ENCODE measurements at regions of chr14 and their contacts with region 1.

Region 1: GRCh38 chr14:74249433-74250375 is 10.5 kb downstream of the VSX2 start:
- DNase-seq: no peak
- H3K4me3 ChIP-seq: no peak overlapping the region
- H3K27ac ChIP-seq: no peak overlapping the region
- H3K4me1 ChIP-seq: no peaks in the 10 kb centered on the region
- H3K27me3 ChIP-seq: no peaks in the 10 kb centered on the region
- CTCF ChIP-seq: no peak

Region 2: GRCh38 chr14:74217672-74218448 is 31.8 kb before region 1 on chr14:
- CTCF ChIA-PET with region 1: interaction called, 5 read pairs
- POLR2A ChIA-PET with region 1: no interaction called
- intact Hi-C with region 1: loop called (anchors 5 kb)
- DNase-seq: peak; percentile 81
- H3K4me3 ChIP-seq: peak overlapping the region; percentile 20
- H3K27ac ChIP-seq: no peak overlapping the region
- H3K4me1 ChIP-seq: no peaks in the 10 kb centered on the region
- H3K27me3 ChIP-seq: no peaks in the 10 kb centered on the region
- CTCF ChIP-seq: peak; percentile 97

Region 3: GRCh38 chr14:74505831-74506230 is 256.1 kb after region 1 on chr14:
- CTCF ChIA-PET with region 1: interaction called, 13 read pairs
- POLR2A ChIA-PET with region 1: no interaction called
- intact Hi-C with region 1: no loop called
- DNase-seq: no peak
- H3K4me3 ChIP-seq: no peak overlapping the region
- H3K27ac ChIP-seq: no peak overlapping the region
- H3K4me1 ChIP-seq: no peaks in the 10 kb centered on the region
- H3K27me3 ChIP-seq: no peaks in the 10 kb centered on the region
- CTCF ChIP-seq: no peak

Region 4: GRCh38 chr14:74516451-74517155 is 266.9 kb after region 1 on chr14:
- CTCF ChIA-PET with region 1: no interaction called
- POLR2A ChIA-PET with region 1: no interaction called
- intact Hi-C with region 1: no loop called
- DNase-seq: no peak
- H3K4me3 ChIP-seq: no peak overlapping the region
- H3K27ac ChIP-seq: no peak overlapping the region
- H3K4me1 ChIP-seq: no peaks in the 10 kb centered on the region
- H3K27me3 ChIP-seq: peaks cover 1% of the 10 kb centered on the region
- CTCF ChIP-seq: no peak